ENCODE measurements at regions of chr14 and their contacts with region 1.

Region 1: GRCh38 chr14:92585981-92586937 is 72.7 kb downstream of the RIN3 start:
- DNase-seq: peak in 1 of 2 donors; percentile 92
- H3K4me3 ChIP-seq: no peak overlapping the region
- H3K27ac ChIP-seq: peak overlapping the region; percentile 91 to 95
- H3K4me1 ChIP-seq: peaks cover 13 to 51% of the 10 kb centered on the region in 2 donors
- H3K27me3 ChIP-seq: no peaks in the 10 kb centered on the region
- CTCF ChIP-seq: no peak

Region 2: DNA sequence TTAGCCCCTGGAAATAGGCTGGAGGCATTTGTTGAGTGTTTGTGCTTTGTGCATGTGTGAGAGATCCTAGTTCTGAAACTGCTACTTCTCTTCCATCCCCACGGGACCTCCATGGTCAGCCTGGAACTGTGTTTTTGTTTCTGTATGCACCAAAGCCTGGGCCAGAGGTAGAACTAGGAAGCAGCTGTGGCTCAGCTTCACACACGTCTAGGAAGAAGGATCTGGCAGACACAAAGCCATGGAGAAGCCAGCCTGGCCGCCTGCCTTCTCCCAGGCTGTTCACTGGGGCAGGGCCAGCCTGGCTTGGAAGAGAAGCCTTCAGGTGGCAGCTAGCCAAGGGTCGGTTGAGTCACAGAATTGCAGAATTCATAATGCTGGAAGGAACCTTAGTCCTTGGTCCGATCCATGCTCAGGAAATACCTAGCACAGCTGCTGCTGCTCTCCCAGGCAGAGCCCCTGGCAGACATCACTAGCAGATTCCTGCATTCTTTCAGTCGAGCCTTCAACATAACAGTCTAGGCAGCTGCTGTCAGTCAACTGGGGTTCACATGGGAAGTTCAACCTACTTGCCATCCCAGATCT is 45.7 kb before region 1 on chr14:
- intact Hi-C with region 1: loop called (anchors 1 kb)
- DNase-seq: peak; percentile 78 to 98
- H3K4me3 ChIP-seq: no peak overlapping the region
- H3K27ac ChIP-seq: peak overlapping the region; percentile 91 to 92
- H3K4me1 ChIP-seq: peaks cover 9 to 18% of the 10 kb centered on the region in 2 donors
- H3K27me3 ChIP-seq: no peaks in the 10 kb centered on the region
- CTCF ChIP-seq: no peak

Region 3: DNA sequence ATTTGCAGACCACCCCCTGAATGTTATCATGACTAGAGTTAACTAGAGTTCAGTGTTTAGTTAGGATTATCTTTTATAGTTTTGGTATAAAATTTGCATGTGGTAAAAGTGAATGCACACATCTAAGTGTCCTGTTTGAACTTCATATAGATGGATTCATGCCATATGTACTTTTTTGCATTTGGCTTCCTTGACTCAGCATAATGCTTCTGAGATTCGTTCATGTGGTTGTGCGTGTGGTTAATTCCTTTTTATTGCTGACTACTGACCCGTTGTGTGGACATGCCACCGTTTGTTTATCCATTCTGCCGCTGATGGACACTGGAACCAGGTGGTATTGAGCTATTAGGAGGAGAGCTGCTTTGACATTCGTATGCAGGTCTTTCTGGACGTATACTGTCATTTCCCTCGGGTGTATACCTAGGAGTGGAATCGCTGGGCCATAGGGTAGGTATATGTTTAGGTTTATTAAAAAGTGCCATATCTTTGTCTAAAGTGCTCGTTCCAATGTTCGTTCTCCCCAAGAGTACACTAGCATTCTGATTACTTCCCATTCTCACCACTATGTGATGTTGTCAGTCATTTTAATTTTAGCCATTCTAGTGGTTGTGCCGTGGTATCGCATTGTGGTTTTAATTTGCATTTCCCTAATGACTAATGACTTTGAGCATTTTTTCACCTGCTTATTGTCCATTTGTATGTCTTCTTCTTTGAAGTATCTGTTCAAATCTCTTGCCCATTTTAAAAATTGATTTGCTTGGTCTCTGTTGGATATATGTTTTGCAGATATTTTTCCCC is 35.0 kb before region 1 on chr14:
- intact Hi-C with region 1: loop called (anchors 2 kb)
- DNase-seq: no peak
- H3K4me3 ChIP-seq: no peak overlapping the region
- H3K27ac ChIP-seq: peak overlapping the region; percentile 87 to 93
- H3K4me1 ChIP-seq: peaks cover 16 to 45% of the 10 kb centered on the region in 2 donors
- H3K27me3 ChIP-seq: no peaks in the 10 kb centered on the region
- CTCF ChIP-seq: peak in 1 of 3 experiments; percentile 40

Region 4: GRCh38 chr14:92649935-92650545 is 63.8 kb after region 1 on chr14:
- intact Hi-C with region 1: loop called (anchors 2 kb)
- DNase-seq: peak; percentile 65 to 91
- H3K4me3 ChIP-seq: no peak overlapping the region
- H3K27ac ChIP-seq: peak overlapping the region; percentile 97
- H3K4me1 ChIP-seq: peaks cover 28 to 44% of the 10 kb centered on the region in 2 donors
- H3K27me3 ChIP-seq: no peaks in the 10 kb centered on the region
- CTCF ChIP-seq: no peak

Region 5: GRCh38 chr14:92737206-92737605 is 150.9 kb after region 1 on chr14:
- intact Hi-C with region 1: no loop called
- DNase-seq: no peak
- H3K4me3 ChIP-seq: no peak overlapping the region
- H3K27ac ChIP-seq: no peak overlapping the region
- H3K4me1 ChIP-seq: no peaks in the 10 kb centered on the region
- H3K27me3 ChIP-seq: no peaks in the 10 kb centered on the region
- CTCF ChIP-seq: no peak

Measured in ascending aorta (tissue), 2 donors.